IMR-90 (cell line): ENCODE measurements at regions of chr18 and their contacts with region 1.

Region 1: DNA sequence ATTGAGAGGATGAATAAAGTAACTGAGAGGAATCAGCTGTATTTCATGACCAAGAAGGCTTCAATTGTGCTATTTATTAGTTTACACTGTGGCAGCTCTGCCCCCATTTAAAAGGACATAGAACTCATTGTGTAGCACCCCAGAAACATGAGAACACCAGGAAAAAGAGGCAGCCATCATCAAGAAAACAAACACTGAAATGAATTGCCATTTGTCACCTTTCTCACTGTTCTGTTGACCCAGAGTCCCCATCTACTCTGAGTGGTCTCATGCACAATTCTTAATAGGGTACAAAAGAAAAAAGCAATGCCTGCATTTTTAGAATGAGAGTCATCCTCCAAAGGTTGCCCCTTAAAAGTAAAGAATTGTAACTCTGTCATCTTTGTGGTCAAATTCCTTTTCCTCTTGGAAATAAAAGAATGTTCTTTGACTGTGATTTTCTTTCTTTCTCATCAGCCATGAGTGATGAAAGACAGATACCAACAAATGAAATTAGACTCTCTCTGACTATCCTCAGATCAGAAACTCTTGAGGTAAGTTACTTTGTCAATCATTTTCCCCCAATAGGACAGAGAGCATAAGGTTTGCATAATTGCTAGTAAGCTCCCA is 1941.9 kb upstream of the PIK3C3 start:
- DNase-seq: no peak
- ATAC-seq: no peak
- H3K4me3 ChIP-seq: no peak overlapping the region
- H3K27ac ChIP-seq: no peak overlapping the region
- H3K4me1 ChIP-seq: no peaks in the 10 kb centered on the region
- H3K27me3 ChIP-seq: no peaks in the 10 kb centered on the region
- CTCF ChIP-seq: no peak
- POLR2A ChIP-seq: no peak
- RAD21 ChIP-seq: no peak

Region 2: DNA sequence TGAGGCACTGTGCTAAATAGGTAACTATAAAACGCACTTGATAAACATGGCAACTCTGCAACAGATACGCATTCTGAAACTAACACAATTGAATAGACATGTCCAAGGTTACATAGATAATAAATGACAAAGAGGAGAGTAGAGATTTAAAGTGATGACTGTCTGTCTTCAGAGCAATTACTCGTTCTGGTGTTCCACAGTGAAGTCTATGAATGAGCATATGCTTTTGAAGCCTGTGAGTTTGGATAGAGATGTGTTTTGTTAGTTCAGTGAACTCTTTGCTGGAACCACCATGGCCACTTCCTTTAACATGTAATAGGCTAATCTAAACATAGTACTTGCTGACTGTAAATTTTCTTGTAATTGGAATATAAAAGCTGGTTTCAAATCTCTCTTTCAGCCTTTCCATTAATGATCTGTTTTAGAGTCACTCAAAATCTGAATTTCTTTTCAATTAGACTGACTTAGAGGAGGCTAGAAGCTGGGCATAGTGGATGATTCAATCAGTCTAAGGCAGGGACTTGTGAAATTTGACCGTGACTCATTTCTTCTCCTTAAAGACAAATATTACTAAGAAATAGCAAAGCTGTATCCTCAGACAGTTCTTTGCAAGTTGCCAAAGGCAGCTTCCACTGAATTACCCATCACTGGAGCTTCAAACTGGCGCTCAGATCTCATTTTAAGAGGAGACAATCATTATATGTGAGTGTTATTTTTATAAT is 1317.4 kb before region 1 on chr18:
- CTCF ChIA-PET with region 1: no interaction called
- POLR2A ChIA-PET with region 1: no interaction called
- dilution Hi-C with region 1: no loop called
- in situ Hi-C with region 1: no loop called
- intact Hi-C with region 1: no loop called
- DNase-seq: no peak
- ATAC-seq: no peak
- H3K4me3 ChIP-seq: no peak overlapping the region
- H3K27ac ChIP-seq: no peak overlapping the region
- H3K4me1 ChIP-seq: no peaks in the 10 kb centered on the region
- H3K27me3 ChIP-seq: no peaks in the 10 kb centered on the region
- CTCF ChIP-seq: no peak
- POLR2A ChIP-seq: no peak
- RAD21 ChIP-seq: no peak

Region 3: DNA sequence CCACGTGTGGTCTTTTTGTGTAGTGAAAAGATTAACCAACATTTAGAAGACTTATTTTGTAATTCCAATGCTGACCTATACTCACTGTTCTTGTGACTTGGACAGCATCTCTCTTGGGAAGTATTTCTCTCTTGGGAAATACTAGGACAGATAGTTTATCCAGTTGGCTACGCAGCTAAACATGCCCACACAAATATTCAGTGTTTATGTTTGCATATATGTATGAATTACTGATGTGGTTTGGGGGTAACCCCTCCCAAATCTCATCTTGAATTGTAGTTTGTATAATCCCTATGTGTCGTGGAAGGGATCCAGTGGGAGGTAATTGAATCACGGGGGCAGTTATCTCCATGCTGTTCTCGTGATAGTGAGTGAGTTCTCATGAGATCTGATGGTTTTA is 385.2 kb before region 1 on chr18:
- CTCF ChIA-PET with region 1: no interaction called
- POLR2A ChIA-PET with region 1: no interaction called
- dilution Hi-C with region 1: no loop called
- in situ Hi-C with region 1: no loop called
- intact Hi-C with region 1: no loop called
- DNase-seq: peak; percentile 77
- ATAC-seq: peak; percentile 71
- H3K4me3 ChIP-seq: no peak overlapping the region
- H3K27ac ChIP-seq: peak overlapping the region; percentile 84; the same call in 1 of the 2 replicates
- H3K4me1 ChIP-seq: peaks cover 11% of the 10 kb centered on the region
- H3K27me3 ChIP-seq: no peaks in the 10 kb centered on the region
- CTCF ChIP-seq: no peak
- POLR2A ChIP-seq: no peak
- RAD21 ChIP-seq: no peak

Region 4: DNA sequence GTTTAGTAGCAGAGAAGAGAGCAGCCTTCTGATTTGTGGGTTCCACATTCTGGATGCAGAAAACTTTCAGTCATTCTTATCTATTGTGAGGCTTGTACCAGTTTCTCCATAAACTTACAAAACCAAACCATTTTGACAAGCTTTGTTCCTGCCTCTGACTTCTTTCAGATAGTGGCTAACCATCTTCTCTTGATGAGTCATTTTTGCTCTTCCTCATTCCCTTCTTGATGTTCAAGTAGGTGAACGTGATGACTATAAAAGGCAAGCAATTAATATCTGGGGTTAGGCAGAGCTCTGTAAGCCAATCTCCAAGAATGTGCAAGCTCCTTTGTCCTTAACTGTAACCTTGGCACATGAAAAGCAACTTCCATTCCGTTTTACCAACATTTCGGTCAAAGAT is 141.1 kb before region 1 on chr18:
- CTCF ChIA-PET with region 1: no interaction called
- POLR2A ChIA-PET with region 1: interaction called, 13 read pairs
- dilution Hi-C with region 1: no loop called
- in situ Hi-C with region 1: no loop called
- intact Hi-C with region 1: no loop called
- DNase-seq: no peak
- ATAC-seq: no peak
- H3K4me3 ChIP-seq: no peak overlapping the region
- H3K27ac ChIP-seq: no peak overlapping the region
- H3K4me1 ChIP-seq: no peaks in the 10 kb centered on the region
- H3K27me3 ChIP-seq: no peaks in the 10 kb centered on the region
- CTCF ChIP-seq: no peak
- POLR2A ChIP-seq: no peak
- RAD21 ChIP-seq: no peak